Left ventricle myocardium superior (tissue), 1 donor: ENCODE measurements at regions of chr7 and their contacts with region 1.

Region 1: DNA sequence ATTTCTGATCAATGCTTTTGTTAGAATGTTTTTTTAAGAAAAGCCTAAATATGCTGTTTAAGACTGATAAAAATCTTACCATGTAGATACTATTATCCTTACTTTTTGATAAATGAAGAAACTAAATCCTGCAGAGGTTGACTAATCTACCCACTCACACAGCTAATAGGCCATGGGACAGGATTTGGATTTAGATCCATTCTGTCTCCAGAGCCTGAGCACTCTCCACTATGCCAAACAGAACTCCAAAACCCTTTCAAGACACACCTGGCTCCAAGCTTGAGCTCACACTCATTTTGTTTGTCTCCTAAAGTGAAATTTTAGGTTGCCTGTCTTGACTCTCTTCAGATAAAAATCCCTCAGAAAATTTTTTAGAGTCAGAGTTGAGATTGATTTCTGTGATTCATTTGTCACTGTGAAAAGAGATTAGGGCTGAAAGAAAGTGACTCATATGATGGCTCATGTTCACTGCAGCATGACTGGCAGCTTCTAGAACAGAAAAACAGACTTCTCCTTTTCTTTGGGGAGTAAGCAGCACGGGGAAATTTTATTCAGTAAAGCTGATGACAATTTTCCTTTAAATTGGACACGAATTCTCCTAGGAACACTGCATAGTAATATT is 132.3 kb upstream of the POT1 start:
- DNase-seq: no peak
- ATAC-seq: no peak

Region 2: GRCh38 chr7:124908259-124908658 is 153.6 kb before region 1 on chr7:
- intact Hi-C with region 1: no loop called
- DNase-seq: no peak
- ATAC-seq: no peak

Region 3: DNA sequence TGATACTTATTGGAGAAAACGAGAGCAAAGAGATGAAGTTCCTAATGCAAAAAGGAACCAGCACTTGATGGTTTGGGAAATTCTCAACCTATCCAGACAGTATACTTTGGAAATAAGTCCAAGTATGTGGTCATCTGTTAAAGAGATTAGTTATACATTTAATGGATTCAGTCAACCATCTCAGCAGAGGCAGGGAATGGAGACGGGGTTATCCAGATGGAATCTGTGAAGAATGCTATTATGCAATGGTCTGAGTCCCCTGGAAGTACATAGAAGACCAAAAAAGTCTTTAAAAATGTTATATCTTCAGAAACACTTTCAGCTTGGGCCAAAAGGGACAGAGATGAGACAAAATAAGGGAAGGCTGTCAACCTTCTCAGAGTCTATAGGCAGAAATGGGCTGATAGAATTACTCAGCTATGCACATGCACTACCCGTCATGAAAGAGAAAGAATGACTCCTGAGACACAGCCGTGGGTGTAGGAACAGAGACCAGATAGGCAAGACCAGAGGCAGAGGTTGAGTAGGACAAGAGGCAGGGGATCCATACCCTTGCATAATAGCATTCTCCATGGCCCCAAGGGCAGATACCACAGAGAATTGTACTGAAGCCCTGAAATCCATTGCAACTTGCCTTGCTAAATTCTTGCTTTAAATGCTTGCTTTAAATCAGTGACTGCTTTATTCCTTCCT is 606.6 kb after region 1 on chr7:
- intact Hi-C with region 1: loop called (anchors 10 kb)
- DNase-seq: no peak
- ATAC-seq: no peak